Activated CD4-positive, alpha-beta memory T cell treated with anti-CD3 and anti-CD28 coated beads for 36 hours (primary cell): ENCODE measurements at regions of chr1 and their contacts with region 1.

Region 1: DNA sequence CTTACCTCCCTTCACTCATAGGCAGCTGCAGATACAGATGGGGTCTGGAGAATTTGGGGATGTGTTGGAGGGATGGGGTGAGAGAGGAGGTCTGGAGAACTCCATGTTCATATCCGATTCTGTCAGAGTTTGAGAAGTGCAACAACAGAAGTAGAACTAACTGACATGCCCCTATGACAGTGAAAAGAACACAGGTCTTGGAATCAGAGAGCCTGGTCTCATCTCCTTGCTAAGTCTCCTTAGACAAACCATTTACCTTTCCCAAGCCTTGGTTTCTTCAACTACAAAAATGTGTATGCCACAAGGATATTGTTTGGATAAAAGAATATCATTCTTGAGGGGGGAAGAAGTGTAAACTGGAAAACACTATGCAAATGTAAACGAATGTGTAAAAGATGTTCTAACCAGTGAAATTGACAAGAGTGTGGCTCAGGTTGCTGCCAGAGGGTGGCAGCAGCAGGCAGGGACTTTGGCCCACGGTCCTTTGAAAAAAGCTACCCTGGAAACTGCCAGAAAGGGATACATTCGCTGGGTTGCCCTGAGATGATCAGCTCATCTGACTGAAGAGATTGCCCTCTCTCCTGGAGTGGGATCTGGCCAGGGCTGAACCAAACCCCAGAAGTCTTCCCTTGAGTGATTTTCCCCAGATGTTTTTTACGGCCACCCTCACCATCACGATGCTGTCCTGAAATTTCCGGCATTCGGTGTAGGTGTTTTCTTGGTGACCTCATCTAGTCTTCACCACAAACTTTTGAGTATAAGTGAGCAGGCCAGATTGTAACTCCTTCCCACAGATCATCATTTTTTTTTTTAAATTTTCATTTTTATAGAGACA is 17.0 kb upstream of the CD2 start:
- DNase-seq: peak; percentile 84
- H3K4me3 Mint-ChIP-seq: peak overlapping the region; percentile 74
- H3K27ac Mint-ChIP-seq: peak overlapping the region; percentile 100
- H3K4me1 Mint-ChIP-seq: peaks cover 68% of the 10 kb centered on the region
- H3K27me3 Mint-ChIP-seq: no peaks in the 10 kb centered on the region

Region 2: DNA sequence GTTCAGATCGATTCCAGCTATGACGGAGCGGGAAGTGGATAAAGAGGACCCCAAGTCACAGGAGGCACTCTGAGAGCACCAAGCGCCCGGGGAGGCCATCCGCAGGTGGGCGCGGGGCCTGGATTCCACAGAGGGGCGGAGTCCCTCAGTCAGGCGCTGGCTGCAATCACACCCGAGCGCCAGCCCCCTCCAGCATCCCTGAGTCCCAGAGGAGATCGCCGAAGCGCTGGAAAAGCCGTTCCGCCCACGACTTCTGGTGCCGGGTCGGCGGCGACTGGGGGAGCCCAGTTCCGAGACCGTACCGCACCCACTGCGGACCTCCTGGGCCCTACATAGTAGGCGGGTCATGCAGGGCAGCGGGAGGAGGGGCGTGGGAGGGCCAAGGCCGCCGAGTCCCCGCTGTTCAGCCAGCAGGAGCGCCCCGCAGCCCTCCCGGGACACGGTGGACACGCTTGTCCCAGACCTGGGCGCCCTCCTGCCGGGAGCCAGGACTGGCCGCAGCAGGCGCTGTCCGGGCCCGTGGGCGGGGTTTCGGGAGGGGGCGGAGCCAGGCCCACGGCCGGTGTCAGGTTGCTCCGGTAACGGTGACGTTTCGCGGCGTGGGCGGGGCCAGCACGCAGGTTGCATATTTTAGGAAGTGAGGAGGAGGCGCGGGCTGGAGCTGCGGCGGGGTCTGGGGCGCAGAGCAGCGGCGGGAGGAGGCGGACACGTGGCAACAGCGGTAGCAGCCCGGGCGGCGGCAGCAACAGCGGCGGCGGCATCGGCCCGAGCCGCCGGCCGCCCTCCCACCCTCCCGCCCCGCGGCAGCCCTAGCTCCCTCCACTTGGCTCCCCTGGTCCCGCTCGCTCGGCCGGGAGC is 364.4 kb before region 1 on chr1 and contains the start of gene ATP1A1:
- CTCF ChIA-PET with region 1: no interaction called
- POLR2A ChIA-PET with region 1: no interaction called
- intact Hi-C with region 1: loop called (anchors 10 kb)
- DNase-seq: peak; percentile 98
- H3K4me3 Mint-ChIP-seq: peak within 1 kb of the TSS; percentile 88
- H3K27ac Mint-ChIP-seq: peak within 1 kb of the TSS; percentile 97
- H3K4me1 Mint-ChIP-seq: peaks cover 38% of the 10 kb centered on the region
- H3K27me3 Mint-ChIP-seq: peaks cover 3% of the 10 kb centered on the region
- total RNA-seq, gene ATP1A1: 253 to 258 TPM

Region 3: DNA sequence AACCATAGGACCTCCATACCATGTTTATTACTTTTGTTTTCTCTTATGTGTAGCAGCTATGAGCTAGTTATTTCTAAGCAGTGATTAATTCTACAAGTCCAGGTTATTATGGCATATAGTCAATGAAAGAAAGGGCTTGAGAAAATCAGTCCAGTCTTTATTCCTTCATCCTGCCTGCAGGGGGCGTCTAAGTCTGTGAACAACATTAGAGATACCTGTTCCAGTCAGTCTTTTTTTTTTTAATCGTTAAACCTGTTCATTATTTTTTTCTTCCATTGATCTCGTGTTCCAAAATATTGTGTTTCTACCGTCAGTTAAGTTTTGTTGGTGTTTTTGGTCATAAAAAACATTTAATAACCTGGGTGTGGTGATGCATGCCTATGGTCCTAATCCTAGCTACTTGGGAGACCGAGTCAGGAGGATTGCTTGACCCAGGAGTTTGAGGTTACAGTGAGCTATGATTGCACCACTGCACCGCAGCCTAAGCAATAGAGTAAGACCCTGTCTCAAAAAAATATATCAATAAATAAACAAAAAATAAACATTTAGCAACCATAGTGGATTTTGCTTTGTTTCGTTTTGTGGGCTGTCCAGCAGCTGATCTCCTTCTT is 12.4 kb before region 1 on chr1:
- CTCF ChIA-PET with region 1: interaction called, 44 read pairs
- POLR2A ChIA-PET with region 1: no interaction called
- intact Hi-C with region 1: no loop called
- DNase-seq: peak; percentile 84
- H3K4me3 Mint-ChIP-seq: no peak overlapping the region
- H3K27ac Mint-ChIP-seq: peak overlapping the region; percentile 64
- H3K4me1 Mint-ChIP-seq: peaks cover 28% of the 10 kb centered on the region
- H3K27me3 Mint-ChIP-seq: no peaks in the 10 kb centered on the region

Region 4: GRCh38 chr1:116763787-116764465 is 26.7 kb after region 1 on chr1:
- CTCF ChIA-PET with region 1: interaction called, 181 read pairs
- POLR2A ChIA-PET with region 1: interaction called, 803 read pairs
- intact Hi-C with region 1: loop called (anchors 1 kb)
- DNase-seq: peak; percentile 79
- H3K4me3 Mint-ChIP-seq: peak overlapping the region; percentile 99
- H3K27ac Mint-ChIP-seq: peak overlapping the region; percentile 99
- H3K4me1 Mint-ChIP-seq: peaks cover 88% of the 10 kb centered on the region
- H3K27me3 Mint-ChIP-seq: peaks cover 3% of the 10 kb centered on the region

Region 5: GRCh38 chr1:116817582-116818064 is 80.4 kb after region 1 on chr1:
- CTCF ChIA-PET with region 1: interaction called, 48 read pairs
- POLR2A ChIA-PET with region 1: interaction called, 56 read pairs
- intact Hi-C with region 1: loop called (anchors 1 kb)
- DNase-seq: peak; percentile 89
- H3K4me3 Mint-ChIP-seq: peak overlapping the region; percentile 60
- H3K27ac Mint-ChIP-seq: peak overlapping the region; percentile 96
- H3K4me1 Mint-ChIP-seq: peaks cover 67% of the 10 kb centered on the region
- H3K27me3 Mint-ChIP-seq: no peaks in the 10 kb centered on the region

Region 6: GRCh38 chr1:116891396-116892079 is 154.3 kb after region 1 on chr1:
- CTCF ChIA-PET with region 1: no interaction called
- POLR2A ChIA-PET with region 1: no interaction called
- intact Hi-C with region 1: no loop called
- DNase-seq: no peak
- H3K4me3 Mint-ChIP-seq: no peak overlapping the region
- H3K27ac Mint-ChIP-seq: no peak overlapping the region
- H3K4me1 Mint-ChIP-seq: peaks cover 3% of the 10 kb centered on the region
- H3K27me3 Mint-ChIP-seq: peaks cover 6% of the 10 kb centered on the region

Region 7: GRCh38 chr1:116934586-116935207 is 197.5 kb after region 1 on chr1:
- CTCF ChIA-PET with region 1: interaction called, 10 read pairs
- POLR2A ChIA-PET with region 1: no interaction called
- intact Hi-C with region 1: loop called (anchors 1 kb)
- DNase-seq: no peak
- H3K4me3 Mint-ChIP-seq: no peak overlapping the region
- H3K27ac Mint-ChIP-seq: no peak overlapping the region
- H3K4me1 Mint-ChIP-seq: peaks cover 26% of the 10 kb centered on the region
- H3K27me3 Mint-ChIP-seq: no peaks in the 10 kb centered on the region

Region 8: DNA sequence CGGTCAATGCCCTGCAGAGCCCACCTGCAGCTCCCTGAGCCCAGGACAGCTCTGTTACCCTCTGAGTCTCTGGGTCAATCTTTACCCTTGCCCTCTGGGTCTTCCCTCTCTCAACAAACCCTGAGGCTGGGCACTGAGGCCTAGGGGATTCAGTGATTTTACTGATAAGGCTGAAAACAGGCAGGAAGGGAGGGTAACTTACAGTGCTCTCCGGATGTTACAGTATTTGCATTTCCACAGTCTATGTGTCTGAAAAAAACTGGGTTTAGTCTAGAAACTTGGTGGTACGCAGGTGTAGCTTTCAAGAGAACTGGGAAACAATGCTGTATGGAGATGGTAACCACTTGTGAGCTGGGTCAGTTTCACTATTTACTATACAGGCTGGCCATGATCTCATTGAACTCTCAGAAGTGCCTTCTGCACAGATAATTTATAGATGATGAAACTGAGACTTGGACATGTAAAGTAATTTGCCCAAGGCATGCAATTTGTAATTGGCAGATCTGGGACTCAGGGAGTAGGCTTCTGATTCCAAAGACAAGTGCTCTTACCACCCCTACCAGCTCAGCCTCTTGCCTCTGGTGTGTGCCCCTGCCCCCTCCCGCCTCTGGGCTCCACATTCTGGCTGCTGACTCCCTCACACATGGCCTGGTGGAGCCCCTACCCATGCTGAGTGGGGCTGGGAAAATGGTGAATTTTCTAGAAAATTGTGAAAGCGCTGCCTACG is 917.4 kb after region 1 on chr1:
- CTCF ChIA-PET with region 1: no interaction called
- POLR2A ChIA-PET with region 1: no interaction called
- intact Hi-C with region 1: loop called (anchors 5 kb)
- DNase-seq: no peak
- H3K4me3 Mint-ChIP-seq: no peak overlapping the region
- H3K27ac Mint-ChIP-seq: peak overlapping the region; percentile 78
- H3K4me1 Mint-ChIP-seq: peaks cover 78% of the 10 kb centered on the region
- H3K27me3 Mint-ChIP-seq: peaks cover 2% of the 10 kb centered on the region